CD4-positive, alpha-beta memory T cell (primary cell): ENCODE measurements at regions of chr3 and their contacts with region 1.

Region 1: GRCh38 chr3:190414297-190414696 is 26.3 kb downstream of the CLDN16 start:
- DNase-seq: no peak
- H3K4me3 ChIP-seq: no peak overlapping the region
- H3K4me3 Mint-ChIP-seq: no peak overlapping the region
- H3K27ac ChIP-seq: no peak overlapping the region
- H3K27ac Mint-ChIP-seq: no peak overlapping the region
- H3K4me1 ChIP-seq: no peaks in the 10 kb centered on the region
- H3K4me1 Mint-ChIP-seq: no peaks in the 10 kb centered on the region
- H3K27me3 ChIP-seq: no peaks in the 10 kb centered on the region
- H3K27me3 Mint-ChIP-seq: peaks cover 0 to 7% of the 10 kb centered on the region in 2 donors

Region 2: DNA sequence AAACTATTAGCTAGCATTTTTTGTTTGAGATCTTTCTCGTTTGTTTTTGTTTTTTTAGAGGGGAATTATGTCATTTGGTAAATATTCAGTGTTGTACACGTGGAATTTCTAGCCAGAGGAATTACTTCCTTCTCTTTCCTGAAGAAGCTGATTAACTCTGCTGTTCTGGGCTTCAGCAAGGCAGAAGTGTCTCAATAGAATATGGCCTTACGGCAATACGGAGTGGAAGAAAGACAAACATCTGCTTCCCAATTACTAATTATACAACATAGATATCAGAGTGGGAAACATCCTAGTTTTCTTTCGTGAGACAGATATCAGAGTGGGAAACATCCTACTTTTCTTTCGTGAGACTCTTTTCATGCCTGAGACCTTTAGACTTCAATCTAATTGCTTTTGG is 305.5 kb before region 1 on chr3:
- CTCF ChIA-PET with region 1: no interaction called
- POLR2A ChIA-PET with region 1: no interaction called
- intact Hi-C with region 1: no loop called
- DNase-seq: no peak
- H3K4me3 ChIP-seq: no peak overlapping the region
- H3K4me3 Mint-ChIP-seq: no peak overlapping the region
- H3K27ac ChIP-seq: no peak overlapping the region
- H3K27ac Mint-ChIP-seq: no peak overlapping the region
- H3K4me1 ChIP-seq: no peaks in the 10 kb centered on the region
- H3K4me1 Mint-ChIP-seq: no peaks in the 10 kb centered on the region
- H3K27me3 ChIP-seq: no peaks in the 10 kb centered on the region
- H3K27me3 Mint-ChIP-seq: peaks cover 4 to 12% of the 10 kb centered on the region in 2 donors

Region 3: GRCh38 chr3:190424478-190425439 is 10.5 kb after region 1 on chr3:
- CTCF ChIA-PET with region 1: interaction called, 10 read pairs
- POLR2A ChIA-PET with region 1: no interaction called
- intact Hi-C with region 1: no loop called
- DNase-seq: peak in 4 of 5 donors; percentile 31 to 44 (median 38)
- H3K4me3 ChIP-seq: no peak overlapping the region
- H3K4me3 Mint-ChIP-seq: peak overlapping the region; percentile 52 to 75 (median 70)
- H3K27ac ChIP-seq: no peak overlapping the region
- H3K27ac Mint-ChIP-seq: peak overlapping the region; percentile 18 to 89 (median 78)
- H3K4me1 ChIP-seq: no peaks in the 10 kb centered on the region
- H3K4me1 Mint-ChIP-seq: peaks cover 6 to 8% (median 7%) of the 10 kb centered on the region in 4 donors
- H3K27me3 ChIP-seq: no peaks in the 10 kb centered on the region
- H3K27me3 Mint-ChIP-seq: no peaks in the 10 kb centered on the region